ENCODE measurements at regions of chr7 and their contacts with region 1.

Region 1: GRCh38 chr7:150378853-150379440 is at the start of gene ZNF775:
- DNase-seq: peak; percentile 91 to 99 (median 96)
- H3K4me3 ChIP-seq: peak within 1 kb of the TSS; percentile 67 to 100 (median 93)
- H3K27ac ChIP-seq: peak within 1 kb of the TSS; percentile 87 to 100 (median 97)
- H3K27me3 ChIP-seq: no peaks in the 10 kb centered on the region
- CTCF ChIP-seq: peak in 31 of 56 donors; percentile 0 to 49 (median 23)
- total RNA-seq, gene ZNF775: 6.0 to 19.8 (median 12.1) TPM

Region 2: GRCh38 chr7:149584530-149584929 is 794.4 kb before region 1 on chr7:
- intact Hi-C with region 1: no loop called
- DNase-seq: no peak
- H3K4me3 ChIP-seq: no peak overlapping the region
- H3K27ac ChIP-seq: no peak overlapping the region
- H3K27me3 ChIP-seq: no peaks in the 10 kb centered on the region
- CTCF ChIP-seq: no peak

Region 3: DNA sequence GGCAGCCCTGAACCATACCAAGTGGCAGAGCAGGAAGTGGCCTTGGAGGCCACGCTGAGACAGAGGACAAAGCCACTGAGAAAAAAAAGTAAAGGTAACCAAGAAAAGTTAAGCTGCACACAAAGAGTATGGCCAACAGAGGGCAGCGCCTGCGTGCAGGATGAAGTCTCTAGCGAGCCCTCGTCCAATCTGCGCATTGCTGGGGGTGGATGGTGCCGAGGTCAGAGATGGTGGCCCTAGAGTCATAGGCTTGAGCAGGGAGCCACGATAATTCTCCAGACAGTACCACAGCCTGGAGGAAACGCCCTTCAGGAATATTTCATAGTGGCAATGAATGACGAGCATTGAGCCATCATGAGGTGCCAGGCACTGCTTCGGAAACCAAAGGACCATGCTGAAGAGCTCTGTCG is 495.5 kb before region 1 on chr7:
- intact Hi-C with region 1: loop called in 1 of 2 experiments (anchors 10 kb)
- DNase-seq: peak in 9 of 10 donors; percentile 68 to 83 (median 77)
- H3K4me3 ChIP-seq: peak overlapping the region in 8 of 59 donors; percentile 0 to 30 (median 18)
- H3K27ac ChIP-seq: peak overlapping the region in 54 of 59 donors; percentile 63 to 96 (median 89)
- H3K27me3 ChIP-seq: no peaks in the 10 kb centered on the region
- CTCF ChIP-seq: peak; percentile 55 to 85 (median 77)

Region 4: DNA sequence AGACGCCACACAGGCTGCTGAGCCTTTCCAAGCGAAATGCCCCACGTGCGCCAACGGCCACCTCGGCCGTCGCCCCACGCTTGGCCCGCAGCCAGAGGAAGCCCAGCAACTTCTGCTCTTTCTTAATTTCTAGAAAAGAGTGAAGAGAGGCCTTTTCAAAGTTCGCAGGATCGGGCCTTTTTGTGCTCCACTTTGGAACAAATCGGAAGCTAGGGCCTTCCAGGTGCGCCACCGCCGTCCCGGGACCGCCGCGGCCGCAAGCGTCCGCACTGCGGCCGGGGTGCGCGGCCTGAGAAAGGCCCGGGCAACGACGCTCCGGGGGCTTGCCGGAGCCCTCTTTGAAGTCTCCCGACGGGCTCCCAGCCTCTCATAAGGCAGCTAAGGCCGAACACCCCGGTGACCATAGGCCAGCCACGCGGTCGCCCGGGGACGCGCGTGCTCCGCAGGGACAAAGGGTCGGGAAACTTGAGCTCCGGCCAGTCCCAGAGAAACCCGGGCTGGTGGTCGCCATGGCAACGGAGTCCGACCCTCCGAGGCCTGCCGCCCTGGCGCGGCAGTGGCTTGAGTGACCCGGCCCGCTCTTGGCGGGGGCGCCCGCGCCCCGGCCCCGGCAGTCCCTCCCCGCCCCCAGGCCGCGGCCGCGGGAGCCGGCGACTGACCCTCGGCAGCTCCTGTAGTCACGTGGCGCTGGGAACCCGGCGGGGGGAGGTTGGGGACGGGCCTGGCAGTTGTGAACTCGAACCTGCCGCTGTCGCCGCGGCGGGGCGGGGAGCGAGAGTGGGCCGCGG is 10.7 kb before region 1 on chr7 and contains the start of gene REPIN1:
- intact Hi-C with region 1: loop called in 1 of 2 experiments (anchors 2 kb)
- DNase-seq: peak; percentile 81 to 94 (median 86)
- H3K4me3 ChIP-seq: peak within 1 kb of the TSS; percentile 61 to 97 (median 89)
- H3K27ac ChIP-seq: peak within 1 kb of the TSS; percentile 83 to 99 (median 97)
- H3K27me3 ChIP-seq: no peaks in the 10 kb centered on the region
- CTCF ChIP-seq: peak in 18 of 56 donors; percentile 3 to 42 (median 25)
- total RNA-seq, gene REPIN1: 82.2 to 205 (median 110) TPM

Region 5: DNA sequence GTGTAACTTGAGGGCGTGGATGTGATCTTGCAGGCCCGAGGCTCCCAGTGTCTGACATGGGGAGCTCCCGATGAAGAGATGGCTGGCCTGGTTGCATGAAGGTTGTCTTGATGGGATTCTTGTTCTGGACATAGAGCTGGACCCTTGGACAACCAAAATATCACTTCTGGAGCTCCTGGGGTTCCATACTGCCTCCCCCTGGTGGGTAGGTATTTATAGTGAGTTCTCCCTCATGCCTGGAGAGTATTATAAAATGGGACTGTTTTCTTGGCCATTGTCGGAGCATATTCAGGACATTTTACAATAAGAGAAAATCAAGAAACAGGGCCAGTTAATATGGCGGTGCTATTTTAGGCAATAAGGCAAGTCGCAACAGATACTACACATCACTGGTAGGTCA is 38.9 kb after region 1 on chr7:
- intact Hi-C with region 1: no loop called
- DNase-seq: peak in 2 of 10 donors; percentile 5 to 24
- H3K4me3 ChIP-seq: no peak overlapping the region
- H3K27ac ChIP-seq: no peak overlapping the region
- H3K27me3 ChIP-seq: no peaks in the 10 kb centered on the region
- CTCF ChIP-seq: no peak